Ascending aorta (tissue), 2 donors: ENCODE measurements at regions of chr2 and their contacts with region 1.

Region 1: GRCh38 chr2:43343573-43344304 is 117.3 kb upstream of the ZFP36L2 start:
- DNase-seq: peak; percentile 69 to 95
- H3K4me3 ChIP-seq: peak overlapping the region; percentile 12 to 33
- H3K27ac ChIP-seq: peak overlapping the region; percentile 85 to 90
- H3K4me1 ChIP-seq: peaks cover 30 to 86% of the 10 kb centered on the region in 2 donors
- H3K27me3 ChIP-seq: no peaks in the 10 kb centered on the region
- CTCF ChIP-seq: no peak

Region 2: DNA sequence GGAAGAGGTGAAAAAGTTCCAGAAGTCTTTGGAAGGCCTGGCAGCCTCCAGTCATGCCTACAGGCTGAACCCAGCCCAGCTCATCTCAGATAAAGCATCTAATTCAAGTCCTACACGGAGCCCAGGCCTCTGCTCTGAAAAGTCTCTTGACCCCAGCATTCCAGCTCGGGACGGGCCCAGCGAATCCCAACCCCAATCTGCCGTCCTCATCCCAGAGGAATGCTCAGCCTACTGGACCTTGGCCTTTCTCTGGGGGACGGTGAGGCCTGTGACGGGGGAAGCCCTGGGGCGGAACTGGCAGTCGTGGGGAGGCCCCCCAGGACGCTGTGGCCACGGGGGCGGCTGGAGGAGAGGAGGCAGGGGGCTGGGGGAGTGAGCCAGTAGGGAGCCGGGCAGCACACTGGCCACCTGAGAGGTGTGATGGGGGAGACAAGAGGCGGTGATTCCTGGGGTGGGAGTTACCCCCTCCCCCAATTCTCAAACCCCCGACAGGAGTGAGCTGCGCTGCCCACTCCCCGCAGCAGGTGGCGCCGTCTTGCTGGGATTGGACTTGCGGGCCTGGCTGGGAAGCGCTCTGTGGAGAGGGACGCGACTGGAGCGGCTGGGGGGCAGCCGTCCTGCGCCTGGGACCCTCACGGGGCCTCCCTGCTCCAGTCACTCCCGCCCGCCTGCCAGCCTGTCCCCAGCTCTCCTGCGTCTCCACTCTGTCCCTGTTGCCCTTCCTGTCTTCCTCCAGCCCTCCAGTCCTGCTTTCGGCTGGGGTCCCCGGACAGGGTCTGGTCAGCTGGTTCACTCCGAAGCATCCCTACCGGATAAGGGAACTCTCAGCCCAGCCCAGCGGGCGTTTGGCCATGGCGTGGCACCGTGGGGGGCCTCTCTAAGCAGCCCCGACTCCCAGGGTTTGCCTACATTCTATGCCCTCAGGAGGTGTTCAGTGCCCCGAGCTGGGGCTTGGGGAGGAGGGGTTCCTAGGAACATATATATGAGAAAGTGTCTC is 368.7 kb before region 1 on chr2:
- intact Hi-C with region 1: loop called (anchors 1 kb)
- DNase-seq: peak in 1 of 2 donors; percentile 87
- H3K4me3 ChIP-seq: peak overlapping the region; percentile 23 to 66
- H3K27ac ChIP-seq: peak overlapping the region; percentile 28 to 66
- H3K4me1 ChIP-seq: peaks cover 7 to 12% of the 10 kb centered on the region in 2 donors
- H3K27me3 ChIP-seq: no peaks in the 10 kb centered on the region
- CTCF ChIP-seq: peak; percentile 93 to 98 (median 97)

Region 3: DNA sequence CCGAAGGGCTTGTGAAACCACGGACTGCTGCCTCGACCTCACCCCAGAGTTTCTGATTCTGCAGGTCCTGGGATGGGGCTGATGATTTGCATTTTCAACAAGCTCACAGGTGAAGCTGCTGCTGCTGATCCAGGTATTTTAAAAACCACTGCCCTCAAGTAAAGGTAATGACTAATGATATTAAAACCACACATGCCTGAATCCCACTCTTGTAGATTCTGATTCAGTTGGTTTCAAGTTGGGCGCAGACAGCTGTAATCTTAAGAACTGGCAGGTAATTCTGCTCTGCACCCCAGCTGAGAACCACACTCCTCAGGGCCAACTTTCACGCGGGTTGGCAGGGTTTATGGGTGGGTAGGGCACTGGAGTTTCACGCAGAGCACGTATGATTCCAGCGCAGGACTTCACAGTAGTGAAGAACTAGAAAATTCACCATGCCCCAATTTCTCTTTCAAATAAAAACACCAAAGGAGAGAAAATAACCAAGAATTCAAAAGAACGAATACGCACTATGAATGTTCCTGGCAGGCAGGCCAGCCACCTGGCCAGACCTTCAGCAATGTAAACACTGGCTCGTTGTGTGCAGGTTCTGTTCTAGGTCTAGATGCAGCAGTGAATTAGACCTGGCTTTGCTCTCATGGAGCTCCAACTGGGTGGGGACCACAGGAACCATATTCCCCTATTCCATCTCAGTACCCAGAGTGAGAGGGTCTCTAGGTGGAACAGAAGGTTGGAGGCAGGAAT is 42.7 kb before region 1 on chr2:
- intact Hi-C with region 1: loop called (anchors 2 kb)
- DNase-seq: peak in 1 of 2 donors; percentile 80
- H3K4me3 ChIP-seq: peak overlapping the region in 1 of 2 donors; percentile 8
- H3K27ac ChIP-seq: peak overlapping the region; percentile 70 to 84
- H3K4me1 ChIP-seq: peaks cover 18 to 56% of the 10 kb centered on the region in 2 donors
- H3K27me3 ChIP-seq: no peaks in the 10 kb centered on the region
- CTCF ChIP-seq: no peak

Region 4: GRCh38 chr2:43391878-43392215 is 48.1 kb after region 1 on chr2:
- intact Hi-C with region 1: loop called (anchors 2 kb)
- DNase-seq: no peak
- H3K4me3 ChIP-seq: peak overlapping the region in 1 of 2 donors; percentile 2
- H3K27ac ChIP-seq: peak overlapping the region; percentile 76 to 79
- H3K4me1 ChIP-seq: peaks cover 4 to 51% of the 10 kb centered on the region in 2 donors
- H3K27me3 ChIP-seq: no peaks in the 10 kb centered on the region
- CTCF ChIP-seq: no peak

Region 5: DNA sequence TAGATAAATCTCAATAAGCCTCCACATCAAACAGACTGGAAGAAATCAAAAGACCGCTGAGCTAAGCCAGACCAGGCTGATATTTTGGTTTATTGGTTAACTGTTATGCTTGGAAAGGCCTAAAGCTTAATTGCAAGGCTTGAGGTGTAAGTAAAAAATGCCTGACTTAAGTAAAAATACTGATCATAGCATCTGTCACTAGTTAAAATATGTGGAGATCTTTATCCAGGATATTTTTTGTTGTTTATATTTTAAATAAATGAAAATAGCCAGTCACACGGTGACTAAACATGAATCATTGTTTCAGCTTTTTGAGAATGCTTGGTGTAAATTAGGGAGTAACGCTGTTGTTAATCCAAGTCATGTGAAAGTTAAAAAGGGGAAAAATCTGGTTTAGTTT is 124.2 kb after region 1 on chr2:
- intact Hi-C with region 1: loop called (anchors 5 kb)
- DNase-seq: no peak
- H3K4me3 ChIP-seq: no peak overlapping the region
- H3K27ac ChIP-seq: peak overlapping the region; percentile 59 to 76
- H3K4me1 ChIP-seq: peaks cover 3 to 42% of the 10 kb centered on the region in 2 donors
- H3K27me3 ChIP-seq: no peaks in the 10 kb centered on the region
- CTCF ChIP-seq: no peak